Naive thymus-derived CD4-positive, alpha-beta T cell (primary cell): ENCODE measurements at regions of chr5 and their contacts with region 1.

Region 1: DNA sequence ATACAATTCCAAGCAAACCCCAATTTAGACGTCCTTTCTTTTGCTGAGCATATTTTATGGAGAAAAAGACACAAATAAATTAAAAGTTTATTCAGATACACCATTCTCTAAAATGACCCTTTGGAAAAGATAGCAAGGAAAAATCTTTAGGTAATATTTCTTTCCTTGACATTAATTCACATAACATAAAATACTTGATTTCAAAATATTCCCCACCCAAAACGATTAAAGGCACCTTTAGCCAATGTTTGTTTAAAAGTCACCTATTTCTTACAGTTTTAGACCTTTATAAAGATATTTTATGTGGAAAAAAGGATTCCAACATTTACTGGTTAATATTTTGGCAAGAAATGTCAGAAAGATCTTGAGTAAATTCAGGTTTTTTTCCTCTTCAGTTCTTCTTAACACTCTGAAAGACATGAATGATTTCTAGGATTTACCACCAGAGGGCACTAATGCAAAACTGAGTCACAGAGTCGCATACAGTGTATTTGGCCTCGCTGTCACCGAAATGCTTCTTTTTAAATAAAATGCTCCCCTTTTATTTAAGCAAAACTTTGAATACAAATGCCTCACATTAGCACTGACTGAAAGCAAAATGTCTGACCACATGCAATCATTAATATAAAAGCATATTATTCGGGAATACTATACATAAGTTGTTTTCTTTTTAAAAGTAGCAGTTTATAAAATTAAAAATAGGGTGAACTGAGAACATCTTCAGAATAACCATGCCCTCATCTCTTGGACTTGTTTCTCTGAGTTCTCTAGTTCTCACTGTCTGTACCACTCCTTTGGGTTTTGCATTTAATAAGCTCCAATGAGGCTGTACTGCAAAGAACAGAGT is 122.5 kb downstream of the SLC1A3 start:
- DNase-seq: peak in 7 of 9 donors; percentile 24 to 69 (median 58)
- ATAC-seq: peak; percentile 59
- H3K4me3 ChIP-seq: no peak overlapping the region
- H3K4me3 Mint-ChIP-seq: no peak overlapping the region
- H3K27ac ChIP-seq: no peak overlapping the region
- H3K27ac Mint-ChIP-seq: peak overlapping the region in 1 of 9 donors; percentile 14
- H3K4me1 ChIP-seq: peaks cover 0 to 2% of the 10 kb centered on the region in 2 donors
- H3K4me1 Mint-ChIP-seq: peaks cover 9 to 19% (median 15%) of the 10 kb centered on the region in 7 donors
- H3K27me3 ChIP-seq: no peaks in the 10 kb centered on the region
- H3K27me3 Mint-ChIP-seq: peaks cover 0 to 11% (median 4%) of the 10 kb centered on the region in 5 donors

Region 2: GRCh38 chr5:36690041-36690961 is 38.6 kb before region 1 on chr5:
- CTCF ChIA-PET with region 1: no interaction called
- POLR2A ChIA-PET with region 1: no interaction called
- intact Hi-C with region 1: no loop called
- DNase-seq: peak; percentile 24 to 64 (median 43)
- ATAC-seq: peak; percentile 81
- H3K4me3 ChIP-seq: peak overlapping the region; percentile 73
- H3K4me3 Mint-ChIP-seq: peak overlapping the region; percentile 72 to 91 (median 86)
- H3K27ac ChIP-seq: no peak overlapping the region
- H3K27ac Mint-ChIP-seq: peak overlapping the region in 3 of 9 donors; percentile 19 to 45 (median 21)
- H3K4me1 ChIP-seq: peaks cover 5 to 8% of the 10 kb centered on the region in 2 donors
- H3K4me1 Mint-ChIP-seq: peaks cover 7 to 14% (median 12%) of the 10 kb centered on the region in 7 donors
- H3K27me3 ChIP-seq: no peaks in the 10 kb centered on the region
- H3K27me3 Mint-ChIP-seq: peaks cover 19 to 36% (median 33%) of the 10 kb centered on the region in 5 donors

Region 3: DNA sequence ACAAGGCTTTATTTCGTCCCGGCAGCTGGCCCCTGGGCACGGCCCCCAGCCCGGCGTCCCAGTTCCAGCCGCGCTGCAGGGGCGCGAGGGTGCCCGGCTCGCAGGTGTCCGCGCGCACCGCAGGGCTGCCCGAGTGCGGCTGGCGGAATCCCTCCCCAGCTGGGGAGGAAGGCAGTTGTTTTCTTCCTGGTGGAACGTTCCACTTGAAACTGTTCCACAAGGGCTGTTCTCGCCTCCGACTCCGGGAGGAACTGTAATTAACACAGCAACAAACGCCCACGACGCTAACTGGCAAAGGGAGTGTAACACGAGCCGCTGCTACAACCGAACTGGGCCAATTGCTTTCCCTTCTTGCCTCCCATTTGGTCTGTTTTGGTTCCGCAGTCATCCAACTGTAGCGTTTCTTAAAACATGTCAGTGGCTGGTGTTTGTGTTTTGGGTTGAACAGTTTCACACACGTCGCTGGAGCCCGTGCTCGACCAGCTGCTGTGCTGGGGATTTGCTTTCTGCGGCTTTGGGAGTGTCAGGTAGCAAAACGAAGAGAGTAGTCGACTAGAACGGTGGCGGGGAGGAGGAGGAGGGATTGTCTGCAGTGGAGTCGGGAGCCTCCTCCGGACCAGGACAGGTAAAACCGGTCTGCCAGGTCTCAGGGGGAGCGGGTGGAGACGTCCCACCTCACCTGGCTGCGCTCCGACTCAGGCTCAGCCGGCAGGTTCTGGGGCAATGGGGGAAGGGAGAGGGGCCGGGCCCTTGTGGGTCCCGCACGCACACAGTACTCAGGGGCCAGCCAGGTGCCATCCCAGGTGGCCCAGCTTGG is 16.1 kb after region 1 on chr5:
- CTCF ChIA-PET with region 1: interaction called, 13 read pairs
- POLR2A ChIA-PET with region 1: no interaction called
- intact Hi-C with region 1: loop called in 1 of 2 experiments (anchors 1 kb)
- DNase-seq: peak in 8 of 9 donors; percentile 14 to 45 (median 29)
- ATAC-seq: peak; percentile 60
- H3K4me3 ChIP-seq: peak overlapping the region; percentile 68
- H3K4me3 Mint-ChIP-seq: peak overlapping the region; percentile 85 to 95 (median 90)
- H3K27ac ChIP-seq: no peak overlapping the region
- H3K27ac Mint-ChIP-seq: peak overlapping the region in 3 of 9 donors; percentile 12 to 33 (median 28)
- H3K4me1 ChIP-seq: peaks cover 0 to 4% of the 10 kb centered on the region in 2 donors
- H3K4me1 Mint-ChIP-seq: peaks cover 12 to 19% (median 16%) of the 10 kb centered on the region in 7 donors
- H3K27me3 ChIP-seq: peaks cover 0 to 5% of the 10 kb centered on the region in 2 donors
- H3K27me3 Mint-ChIP-seq: peaks cover 46 to 64% (median 54%) of the 10 kb centered on the region in 5 donors

Region 4: DNA sequence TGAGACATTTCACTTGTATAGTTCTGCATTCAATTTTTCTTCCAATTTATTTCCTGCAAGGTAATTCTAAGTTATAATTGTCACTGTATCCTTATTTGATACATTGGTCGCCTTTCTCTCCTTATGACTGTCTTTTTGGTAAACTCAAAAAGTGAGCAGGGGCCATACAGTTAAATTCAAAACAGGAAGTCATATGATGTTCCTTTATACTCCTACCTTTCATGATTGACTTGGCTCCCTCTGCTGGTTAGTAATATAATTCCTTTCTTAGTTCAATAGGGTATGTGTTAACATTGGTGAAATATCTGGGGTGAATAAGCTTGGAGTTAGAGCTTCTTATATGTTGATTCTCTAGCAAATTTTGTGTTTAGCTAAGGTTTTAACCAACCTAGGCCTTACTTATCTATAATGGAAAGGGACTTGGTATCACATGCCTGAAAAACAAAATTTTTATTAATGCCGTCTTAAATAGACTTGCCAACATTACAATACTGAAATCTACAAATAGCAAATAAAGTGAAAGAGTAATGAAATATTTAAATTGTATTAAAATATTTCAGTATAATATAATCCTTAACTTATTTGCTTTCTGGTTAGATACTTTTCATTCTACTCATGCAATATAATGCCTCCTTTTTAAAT is 141.6 kb after region 1 on chr5:
- CTCF ChIA-PET with region 1: interaction called, 7 read pairs
- POLR2A ChIA-PET with region 1: interaction called, 7 read pairs
- intact Hi-C with region 1: loop called (anchors 1 to 2 kb)
- DNase-seq: peak in 7 of 9 donors; percentile 56 to 78 (median 71)
- ATAC-seq: peak; percentile 92
- H3K4me3 ChIP-seq: no peak overlapping the region
- H3K4me3 Mint-ChIP-seq: peak overlapping the region in 9 of 10 donors; percentile 13 to 75 (median 57)
- H3K27ac ChIP-seq: no peak overlapping the region
- H3K27ac Mint-ChIP-seq: peak overlapping the region in 8 of 9 donors; percentile 6 to 70 (median 38)
- H3K4me1 ChIP-seq: peaks cover 12% of the 10 kb centered on the region in 2 donors
- H3K4me1 Mint-ChIP-seq: peaks cover 20 to 64% (median 53%) of the 10 kb centered on the region in 7 donors
- H3K27me3 ChIP-seq: no peaks in the 10 kb centered on the region
- H3K27me3 Mint-ChIP-seq: no peaks in the 10 kb centered on the region

Region 5: GRCh38 chr5:36897616-36898015 is 168.7 kb after region 1 on chr5:
- CTCF ChIA-PET with region 1: no interaction called
- POLR2A ChIA-PET with region 1: no interaction called
- intact Hi-C with region 1: no loop called
- DNase-seq: no peak
- ATAC-seq: no peak
- H3K4me3 ChIP-seq: no peak overlapping the region
- H3K4me3 Mint-ChIP-seq: peak overlapping the region in 7 of 10 donors; percentile 7 to 64 (median 30)
- H3K27ac ChIP-seq: no peak overlapping the region
- H3K27ac Mint-ChIP-seq: peak overlapping the region in 1 of 9 donors; percentile 2
- H3K4me1 ChIP-seq: peaks cover 8 to 12% of the 10 kb centered on the region in 2 donors
- H3K4me1 Mint-ChIP-seq: peaks cover 37 to 90% (median 81%) of the 10 kb centered on the region in 7 donors
- H3K27me3 ChIP-seq: no peaks in the 10 kb centered on the region
- H3K27me3 Mint-ChIP-seq: no peaks in the 10 kb centered on the region

Region 6: GRCh38 chr5:36908544-36909260 is 179.8 kb after region 1 on chr5:
- CTCF ChIA-PET with region 1: no interaction called
- POLR2A ChIA-PET with region 1: no interaction called
- intact Hi-C with region 1: no loop called
- DNase-seq: no peak
- ATAC-seq: no peak
- H3K4me3 ChIP-seq: no peak overlapping the region
- H3K4me3 Mint-ChIP-seq: peak overlapping the region in 5 of 10 donors; percentile 16 to 57 (median 46)
- H3K27ac ChIP-seq: no peak overlapping the region
- H3K27ac Mint-ChIP-seq: peak overlapping the region in 3 of 9 donors; percentile 12 to 32 (median 13)
- H3K4me1 ChIP-seq: peaks cover 0 to 27% of the 10 kb centered on the region in 2 donors
- H3K4me1 Mint-ChIP-seq: peaks cover 18 to 60% (median 46%) of the 10 kb centered on the region in 7 donors
- H3K27me3 ChIP-seq: no peaks in the 10 kb centered on the region
- H3K27me3 Mint-ChIP-seq: no peaks in the 10 kb centered on the region

Region 7: GRCh38 chr5:36944607-36945225 is 215.8 kb after region 1 on chr5:
- CTCF ChIA-PET with region 1: interaction called, 9 read pairs
- POLR2A ChIA-PET with region 1: no interaction called
- intact Hi-C with region 1: loop called in 1 of 2 experiments (anchors 2 kb)
- DNase-seq: peak in 7 of 9 donors; percentile 7 to 57 (median 47)
- ATAC-seq: peak; percentile 73
- H3K4me3 ChIP-seq: no peak overlapping the region
- H3K4me3 Mint-ChIP-seq: no peak overlapping the region
- H3K27ac ChIP-seq: no peak overlapping the region
- H3K27ac Mint-ChIP-seq: no peak overlapping the region
- H3K4me1 ChIP-seq: peaks cover 0 to 4% of the 10 kb centered on the region in 2 donors
- H3K4me1 Mint-ChIP-seq: peaks cover 10 to 80% (median 69%) of the 10 kb centered on the region in 7 donors
- H3K27me3 ChIP-seq: no peaks in the 10 kb centered on the region
- H3K27me3 Mint-ChIP-seq: no peaks in the 10 kb centered on the region

Region 8: DNA sequence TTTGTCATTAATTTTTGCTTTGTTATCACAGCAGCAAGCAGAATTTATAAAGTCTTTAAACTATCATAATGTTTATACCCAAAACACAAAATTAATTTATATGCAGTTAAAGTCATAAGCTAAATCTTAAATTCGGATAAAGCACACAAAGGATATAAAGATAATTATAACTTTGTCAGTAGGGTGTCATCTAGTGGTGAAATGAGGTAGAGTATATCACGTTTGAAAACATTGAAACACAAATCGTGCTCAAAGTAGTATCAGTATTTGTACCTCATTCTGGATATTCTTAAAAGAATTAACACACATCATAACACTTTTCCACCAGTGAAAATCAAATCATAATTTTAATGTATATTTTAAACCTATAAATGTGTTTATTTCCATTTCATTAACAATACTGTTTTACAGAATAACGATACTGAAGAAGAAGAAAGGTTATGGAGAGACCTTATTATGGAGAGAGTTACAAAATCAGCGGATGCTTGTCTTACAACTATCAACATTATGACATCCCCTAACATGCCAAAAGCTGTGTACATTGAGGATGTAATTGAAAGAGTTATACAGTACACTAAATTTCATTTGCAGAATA is 277.1 kb after region 1 on chr5:
- CTCF ChIA-PET with region 1: interaction called, 10 read pairs
- POLR2A ChIA-PET with region 1: no interaction called
- intact Hi-C with region 1: loop called (anchors 1 to 2 kb)
- DNase-seq: peak in 6 of 9 donors; percentile 1 to 25 (median 13)
- ATAC-seq: peak; percentile 54
- H3K4me3 ChIP-seq: no peak overlapping the region
- H3K4me3 Mint-ChIP-seq: no peak overlapping the region
- H3K27ac ChIP-seq: no peak overlapping the region
- H3K27ac Mint-ChIP-seq: peak overlapping the region in 1 of 9 donors; percentile 6
- H3K4me1 ChIP-seq: no peaks in the 10 kb centered on the region
- H3K4me1 Mint-ChIP-seq: no peaks in the 10 kb centered on the region
- H3K27me3 ChIP-seq: no peaks in the 10 kb centered on the region
- H3K27me3 Mint-ChIP-seq: no peaks in the 10 kb centered on the region